Ovary (tissue), 10 donors: ENCODE measurements at regions of chr9 and their contacts with region 1.

Region 1: DNA sequence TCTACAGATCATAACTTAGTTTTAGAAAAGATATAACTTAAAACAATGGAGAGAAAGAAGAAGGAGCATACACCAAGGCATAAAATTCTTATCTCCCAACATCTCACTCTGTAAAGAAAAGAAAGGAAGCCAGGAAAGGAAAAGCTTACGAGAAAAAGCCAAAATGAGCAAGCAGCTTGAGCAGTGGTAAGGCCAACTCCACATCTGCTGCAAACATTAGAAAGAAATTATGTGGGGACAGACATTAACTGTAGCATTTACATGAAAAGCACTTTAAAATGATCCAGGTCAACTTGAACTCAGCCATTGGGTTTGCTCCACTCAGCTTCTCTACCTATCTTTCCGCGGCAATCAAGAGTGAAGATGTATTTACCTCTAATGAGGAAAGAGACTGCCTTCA is 176.9 kb downstream of the BNC2 start:
- DNase-seq: no peak
- H3K4me3 ChIP-seq: no peak overlapping the region
- H3K27ac ChIP-seq: no peak overlapping the region
- H3K4me1 ChIP-seq: peaks cover 10% of the 10 kb centered on the region
- H3K27me3 ChIP-seq: no peaks in the 10 kb centered on the region
- CTCF ChIP-seq: no peak
- EP300 ChIP-seq: no peak
- POLR2A ChIP-seq: no peak

Region 2: DNA sequence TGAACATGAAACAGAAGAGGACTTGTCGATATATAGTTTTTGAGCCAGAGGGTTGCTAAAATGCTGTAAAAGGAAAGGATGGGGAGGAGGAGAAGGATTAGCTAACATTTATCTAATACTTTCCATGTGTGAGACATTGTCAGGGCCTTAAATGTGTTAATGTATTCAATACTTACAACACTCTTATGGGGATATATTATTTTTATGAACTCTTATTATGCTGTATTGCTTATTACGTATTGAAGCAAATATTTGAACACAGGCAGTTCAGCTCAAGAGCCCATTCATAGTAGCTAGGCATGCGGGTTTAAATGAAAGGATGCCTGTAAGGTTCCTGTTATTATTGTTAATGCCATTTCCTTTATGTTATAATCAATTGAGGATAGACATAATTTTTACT is 749.3 kb before region 1 on chr9:
- intact Hi-C with region 1: no loop called
- DNase-seq: no peak
- H3K4me3 ChIP-seq: no peak overlapping the region
- H3K27ac ChIP-seq: no peak overlapping the region
- H3K4me1 ChIP-seq: no peaks in the 10 kb centered on the region
- H3K27me3 ChIP-seq: no peaks in the 10 kb centered on the region
- CTCF ChIP-seq: no peak
- EP300 ChIP-seq: no peak
- POLR2A ChIP-seq: no peak

Region 3: DNA sequence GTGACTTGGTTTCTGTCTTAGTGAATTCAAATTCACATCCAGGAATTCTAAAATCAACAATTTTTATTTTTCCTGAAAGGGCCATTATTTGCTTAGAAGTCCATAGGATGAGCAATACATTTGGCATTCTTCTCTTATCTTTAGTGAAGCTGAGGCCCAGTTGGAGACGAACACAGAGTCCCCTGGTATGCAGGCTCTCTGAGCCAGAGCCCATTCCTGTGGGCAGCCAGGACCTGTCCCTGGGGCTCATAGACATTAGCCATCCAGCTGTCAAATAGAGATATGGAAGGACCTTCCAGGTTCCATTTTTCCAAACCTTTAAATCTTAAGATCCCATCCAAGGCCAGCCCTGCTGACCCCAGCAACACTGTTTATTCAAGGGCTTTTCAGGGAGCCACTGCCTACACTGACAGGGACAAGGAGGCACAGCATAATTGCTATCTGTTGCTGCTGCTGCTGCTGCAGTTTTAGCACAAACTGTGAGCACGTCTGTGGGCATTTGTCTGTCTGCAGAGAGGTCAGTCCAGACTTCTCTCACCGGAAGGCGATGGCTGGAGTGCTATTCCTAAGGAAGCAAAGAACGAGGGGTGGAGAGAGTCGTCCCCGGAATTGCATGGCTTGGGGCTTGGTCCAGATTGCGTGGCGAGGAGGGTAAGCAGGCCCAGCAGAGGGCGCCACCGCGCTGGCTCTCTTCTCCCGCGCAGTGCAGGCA is 501.8 kb before region 1 on chr9:
- intact Hi-C with region 1: loop called in 1 of 4 experiments (anchors 10 kb)
- DNase-seq: peak; percentile 87 to 95 (median 91)
- H3K4me3 ChIP-seq: no peak overlapping the region
- H3K27ac ChIP-seq: peak overlapping the region in 1 of 2 donors; percentile 43
- H3K4me1 ChIP-seq: peaks cover 11% of the 10 kb centered on the region
- H3K27me3 ChIP-seq: no peaks in the 10 kb centered on the region
- CTCF ChIP-seq: peak; percentile 61 to 83 (median 81)
- EP300 ChIP-seq: no peak
- POLR2A ChIP-seq: no peak